ENCODE measurements at regions of chr5 and their contacts with region 1.

Region 1: DNA sequence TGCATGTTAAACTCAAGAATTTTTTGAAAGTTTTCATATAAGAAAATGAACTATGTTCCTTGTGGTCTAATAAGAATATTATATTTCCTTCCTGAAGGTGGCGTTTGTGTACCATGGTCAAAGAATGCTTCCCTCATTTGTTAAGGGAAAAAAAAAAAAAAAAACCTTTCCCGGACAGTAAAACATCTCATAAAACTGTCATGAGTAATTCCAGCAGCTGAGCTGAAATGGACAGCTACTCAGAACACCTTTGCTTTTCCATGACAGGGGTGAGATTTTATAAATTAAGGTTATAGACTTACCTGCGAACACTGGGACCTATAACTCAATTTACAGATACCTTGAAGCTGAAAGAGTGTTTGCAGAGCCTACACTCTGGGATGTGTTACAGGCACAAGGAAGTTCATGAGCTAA is 113.2 kb upstream of the RANBP3L start:
- DNase-seq: no peak
- ATAC-seq: no peak
- H3K4me3 Mint-ChIP-seq: no peak overlapping the region
- H3K27ac Mint-ChIP-seq: no peak overlapping the region
- H3K4me1 Mint-ChIP-seq: peaks cover 38% of the 10 kb centered on the region
- H3K27me3 Mint-ChIP-seq: peaks cover 60% of the 10 kb centered on the region
- CTCF ChIP-seq: peak; percentile 22; the same call in 1 of the 2 replicates

Region 2: DNA sequence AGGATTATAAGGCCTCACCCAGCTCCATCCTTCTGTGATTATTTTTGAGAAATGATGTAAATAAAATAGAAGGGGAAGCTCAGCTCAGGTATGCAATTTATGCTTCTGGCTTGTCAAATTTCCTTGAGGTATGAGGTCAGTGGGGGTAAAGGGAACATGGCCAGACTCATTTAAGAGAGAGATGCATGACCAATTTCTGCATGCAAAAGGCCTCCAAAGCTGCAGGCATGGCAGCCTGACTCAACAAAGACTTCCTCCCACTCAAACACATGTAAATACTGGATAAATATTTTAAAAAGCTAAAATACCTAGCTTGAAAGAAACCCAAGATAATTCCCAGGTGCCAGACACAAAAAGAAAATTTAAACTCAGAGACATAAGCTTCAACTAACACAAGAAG is 90.1 kb after region 1 on chr5:
- CTCF ChIA-PET with region 1: interaction called, 19 read pairs
- POLR2A ChIA-PET with region 1: no interaction called
- DNase-seq: no peak
- ATAC-seq: no peak
- H3K4me3 Mint-ChIP-seq: no peak overlapping the region
- H3K27ac Mint-ChIP-seq: no peak overlapping the region
- H3K4me1 Mint-ChIP-seq: peaks cover 21% of the 10 kb centered on the region
- H3K27me3 Mint-ChIP-seq: peaks cover 2% of the 10 kb centered on the region
- CTCF ChIP-seq: no peak

Region 3: DNA sequence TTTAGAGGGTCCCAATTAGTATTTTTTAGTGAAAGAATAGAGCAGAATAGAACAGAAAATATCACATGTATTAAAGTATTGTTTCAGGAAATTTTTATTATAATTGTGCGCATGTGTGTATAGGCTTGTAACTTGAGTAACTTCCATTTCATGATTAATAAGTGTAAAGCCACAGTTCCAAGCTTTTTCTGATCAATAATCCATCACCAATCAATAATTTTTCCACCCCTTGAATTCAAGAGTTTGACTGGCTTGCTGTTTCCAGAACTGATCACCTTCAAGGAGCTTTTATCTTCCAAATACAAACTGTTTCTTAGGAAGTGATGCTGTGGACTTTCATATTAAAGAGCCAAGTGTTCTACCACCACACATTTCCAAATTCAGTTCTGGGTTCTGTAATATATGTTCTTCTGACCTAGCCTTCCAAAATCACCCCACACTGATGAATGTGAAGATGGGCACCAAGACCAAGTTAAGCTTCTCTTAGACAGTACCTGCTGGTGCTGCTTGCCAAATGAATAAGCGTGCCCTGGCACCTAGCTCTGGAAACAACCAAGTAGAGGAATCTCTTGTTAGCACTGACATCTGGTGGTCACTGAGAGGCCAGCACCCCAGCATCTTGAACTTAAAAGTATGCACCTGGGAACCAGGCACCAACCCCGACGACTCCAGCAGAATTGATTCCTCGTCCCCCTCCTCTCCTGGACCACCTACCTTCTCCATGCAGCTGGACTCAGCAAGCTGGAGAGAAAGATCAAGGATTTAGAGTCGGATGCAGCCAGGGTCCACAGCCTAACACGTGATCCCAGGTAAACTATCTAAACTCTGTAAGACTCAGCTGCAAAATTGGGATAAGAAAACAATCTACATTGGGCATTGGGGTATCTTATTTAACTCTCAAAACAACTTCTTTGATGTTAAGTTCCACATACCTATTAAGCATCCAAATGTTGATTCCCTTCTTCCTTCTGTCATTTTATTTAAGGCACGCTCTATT is 281.1 kb after region 1 on chr5:
- CTCF ChIA-PET with region 1: interaction called, 51 read pairs
- POLR2A ChIA-PET with region 1: no interaction called
- DNase-seq: peak; percentile 79
- ATAC-seq: peak; percentile 75
- H3K4me3 Mint-ChIP-seq: no peak overlapping the region
- H3K27ac Mint-ChIP-seq: no peak overlapping the region
- H3K4me1 Mint-ChIP-seq: peaks cover 12% of the 10 kb centered on the region
- H3K27me3 Mint-ChIP-seq: peaks cover 44% of the 10 kb centered on the region
- CTCF ChIP-seq: peak; percentile 68

Measured in WTC11 (cell line).